ENCODE measurements at regions of chr11 and their contacts with region 1.

Region 1: GRCh38 chr11:112310419-112310818 is 49.8 kb upstream of the PLET1 start:
- DNase-seq: no peak
- H3K4me3 ChIP-seq: no peak overlapping the region
- H3K27me3 ChIP-seq: no peaks in the 10 kb centered on the region
- CTCF ChIP-seq: no peak

Region 2: DNA sequence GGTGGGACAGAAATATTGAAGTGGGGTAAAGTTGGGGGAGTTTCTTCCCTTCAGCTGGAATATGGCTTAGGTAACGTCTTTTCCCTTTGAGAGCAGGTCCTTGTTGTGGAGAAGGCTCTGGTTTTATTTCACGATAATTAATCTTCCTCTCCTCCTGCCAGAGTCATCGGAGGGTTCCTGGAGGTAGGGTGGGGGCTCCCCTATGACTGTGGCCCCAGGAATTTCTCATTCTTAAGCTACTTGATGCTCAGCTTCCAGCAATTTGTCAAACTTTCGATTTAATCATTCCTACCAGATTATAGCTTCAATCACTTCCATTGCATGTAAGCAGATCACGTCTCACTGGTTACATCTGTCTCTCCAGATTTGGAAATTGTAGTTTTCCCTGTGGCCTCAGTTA is 193.0 kb after region 1 on chr11:
- CTCF ChIA-PET with region 1: no interaction called
- POLR2A ChIA-PET with region 1: interaction called, 10 read pairs
- DNase-seq: no peak
- H3K4me3 ChIP-seq: no peak overlapping the region
- H3K27me3 ChIP-seq: no peaks in the 10 kb centered on the region
- CTCF ChIP-seq: no peak